ENCODE measurements at regions of chr1 and their contacts with region 1.

Region 1: GRCh38 chr1:24070821-24071393 is 41.0 kb downstream of the MYOM3 start:
- H3K4me3 ChIP-seq: no peak overlapping the region
- H3K27ac ChIP-seq: no peak overlapping the region
- H3K4me1 ChIP-seq: no peaks in the 10 kb centered on the region
- CTCF ChIP-seq: peak; percentile 88

Region 2: DNA sequence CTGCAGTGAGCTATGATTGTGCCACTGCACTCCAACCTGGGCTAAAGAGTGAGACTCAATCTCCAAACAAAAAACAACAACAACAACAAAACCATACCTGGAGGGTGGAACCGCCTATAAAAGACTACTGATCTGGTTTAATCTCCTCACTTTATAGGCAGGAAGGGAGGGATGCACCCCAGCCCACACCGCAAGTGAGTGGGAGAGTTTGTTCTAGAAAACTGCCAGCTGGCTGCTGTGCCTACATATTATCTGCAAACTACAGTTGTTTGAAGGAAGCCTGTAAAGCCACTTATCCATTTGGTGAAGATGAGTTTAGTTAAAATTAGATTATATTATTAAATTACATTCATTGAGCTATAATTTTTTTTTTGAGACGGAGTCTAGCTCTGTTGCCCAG is 81.6 kb before region 1 on chr1:
- CTCF ChIA-PET with region 1: no interaction called
- POLR2A ChIA-PET with region 1: no interaction called
- H3K4me3 ChIP-seq: no peak overlapping the region
- H3K27ac ChIP-seq: no peak overlapping the region
- H3K4me1 ChIP-seq: peaks cover 5% of the 10 kb centered on the region
- CTCF ChIP-seq: no peak

Region 3: DNA sequence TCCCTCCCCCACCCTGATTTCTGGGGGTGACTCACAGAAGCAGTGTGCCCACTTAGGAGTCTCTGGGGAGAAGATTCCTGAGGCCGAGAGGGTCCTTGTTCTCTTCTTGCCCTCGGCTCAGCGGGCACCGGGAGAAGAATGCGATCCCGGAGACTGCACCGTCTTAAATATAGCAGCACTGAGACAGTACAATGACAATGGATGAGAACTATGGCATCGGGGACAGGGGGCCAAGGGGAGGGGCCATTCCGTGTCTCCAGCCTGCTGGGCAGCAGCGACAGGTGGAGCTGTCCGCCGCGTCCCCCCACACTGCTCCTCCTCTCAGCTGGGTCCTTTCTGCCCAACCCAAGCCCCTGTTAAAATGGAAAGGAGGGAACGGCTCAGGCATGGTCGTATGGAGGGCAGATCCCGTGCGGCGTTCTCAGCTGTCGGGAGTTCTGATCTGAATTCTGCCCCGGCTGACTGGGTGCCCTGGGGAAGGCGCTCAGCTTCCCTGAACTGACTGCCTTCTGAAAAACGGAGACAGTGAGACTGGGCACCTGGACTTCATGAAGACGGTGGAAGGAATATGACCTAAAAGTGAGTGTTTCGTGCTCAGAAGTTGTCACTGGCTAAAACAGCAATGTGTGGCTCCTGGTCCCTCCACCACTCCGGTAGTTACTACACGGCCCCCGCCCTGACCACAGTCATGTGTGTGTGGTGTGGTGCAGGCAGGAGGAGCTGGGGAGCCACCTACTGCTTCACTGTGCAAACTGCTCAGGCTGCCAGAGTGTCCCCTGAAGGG is 41.3 kb after region 1 on chr1 and contains the start of gene MYOM3:
- CTCF ChIA-PET with region 1: interaction called, 10 read pairs
- POLR2A ChIA-PET with region 1: no interaction called
- H3K4me3 ChIP-seq: peak within 1 kb of the TSS; percentile 17
- H3K27ac ChIP-seq: no peak within 1 kb of the TSS
- H3K4me1 ChIP-seq: no peaks in the 10 kb centered on the region
- CTCF ChIP-seq: peak; percentile 78